WTC11 (cell line): ENCODE measurements at regions of chr18 and their contacts with region 1.

Region 1: DNA sequence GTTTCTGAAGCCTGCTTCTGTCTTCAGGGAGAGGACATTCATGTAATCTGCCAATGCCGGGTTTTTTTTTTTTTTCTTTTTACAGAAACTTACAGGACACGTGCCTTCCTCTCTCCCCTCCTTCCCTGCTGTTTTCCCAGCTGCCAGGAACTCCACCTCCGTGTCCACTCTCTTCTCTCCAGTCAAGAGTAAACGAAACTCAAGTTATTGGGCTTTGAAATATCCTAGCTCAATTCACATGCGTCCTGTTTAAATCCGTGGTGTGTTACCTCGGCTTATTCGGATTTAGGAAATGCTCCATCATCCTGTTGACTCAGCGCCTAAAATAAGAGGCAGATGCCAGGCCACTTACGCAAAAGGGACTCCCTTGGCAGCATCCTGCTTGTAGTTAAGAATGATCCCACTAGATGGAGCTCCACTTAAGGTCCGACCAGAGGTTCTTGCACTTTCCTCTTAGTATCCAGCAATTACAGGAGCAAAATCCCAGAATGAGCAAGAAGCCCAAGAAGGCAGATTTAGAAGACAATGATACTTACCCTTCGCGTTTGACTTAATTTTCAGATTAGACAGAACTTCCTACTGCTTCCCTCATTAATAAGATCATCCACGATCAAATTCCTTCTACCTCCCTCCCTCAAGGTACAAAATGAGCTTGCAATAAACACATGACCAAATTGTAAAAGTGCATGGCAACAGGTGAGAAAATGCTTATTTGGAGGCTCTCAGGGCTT is 97.2 kb upstream of the ZCCHC2 start:
- DNase-seq: peak; percentile 57
- ATAC-seq: peak; percentile 94
- H3K4me3 Mint-ChIP-seq: peak overlapping the region; percentile 72
- H3K27ac Mint-ChIP-seq: peak overlapping the region; percentile 58; the same call in 1 of the 2 replicates
- H3K4me1 Mint-ChIP-seq: peaks cover 15% of the 10 kb centered on the region
- H3K27me3 Mint-ChIP-seq: peaks cover 2% of the 10 kb centered on the region
- CTCF ChIP-seq: peak; percentile 43

Region 2: GRCh38 chr18:62324917-62325805 is 100.5 kb before region 1 on chr18 and contains the start of gene TNFRSF11A:
- CTCF ChIA-PET with region 1: interaction called, 10 read pairs
- POLR2A ChIA-PET with region 1: no interaction called
- DNase-seq: peak; percentile 75
- ATAC-seq: peak; percentile 78
- H3K4me3 Mint-ChIP-seq: peak within 1 kb of the TSS; percentile 80
- H3K27ac Mint-ChIP-seq: no peak within 1 kb of the TSS
- H3K4me1 Mint-ChIP-seq: peaks cover 61% of the 10 kb centered on the region
- H3K27me3 Mint-ChIP-seq: peaks cover 55% of the 10 kb centered on the region
- CTCF ChIP-seq: peak; percentile 43; the same call in 1 of the 2 replicates
- total RNA-seq, gene TNFRSF11A: 3.9 to 4.9 TPM (median 4.7 TPM) in 3 replicates

Region 3: DNA sequence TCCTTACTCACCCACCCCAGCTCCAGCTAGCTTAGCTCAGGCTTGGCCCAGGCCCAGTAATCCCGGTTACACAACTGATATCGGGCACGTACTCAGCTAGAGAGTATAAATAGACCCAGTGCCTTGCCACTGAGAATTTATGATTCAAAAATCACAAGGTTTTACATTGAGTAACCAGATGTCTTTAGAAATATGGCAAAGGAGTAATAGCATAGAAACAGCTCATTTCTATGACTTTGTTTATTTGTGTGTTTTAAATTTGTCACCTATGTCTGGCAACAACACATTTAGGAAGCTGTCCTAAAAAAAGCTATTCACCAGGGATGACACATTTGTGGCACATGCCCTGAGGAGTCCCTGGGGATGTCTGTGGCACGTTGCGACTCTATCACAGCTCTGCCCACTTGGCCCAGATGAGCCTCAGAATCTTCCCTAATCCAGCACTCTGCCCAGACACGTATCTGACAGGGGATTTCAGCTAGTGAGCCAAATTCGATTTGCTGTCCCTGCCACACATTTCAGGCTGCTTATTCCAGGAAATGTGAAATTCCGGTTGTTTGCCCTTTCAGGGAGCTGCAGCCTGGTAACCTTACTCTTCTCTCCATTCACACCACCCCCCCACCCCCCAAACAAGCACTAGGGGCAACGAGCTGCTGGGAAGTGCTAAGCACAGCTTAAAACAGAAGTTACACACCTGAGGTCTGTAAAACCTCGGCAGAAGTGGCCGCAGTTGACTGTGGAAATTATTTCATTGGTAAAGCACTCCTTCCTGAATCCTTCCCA is 11.8 kb after region 1 on chr18:
- CTCF ChIA-PET with region 1: interaction called, 18 read pairs
- POLR2A ChIA-PET with region 1: no interaction called
- DNase-seq: no peak
- ATAC-seq: no peak
- H3K4me3 Mint-ChIP-seq: no peak overlapping the region
- H3K27ac Mint-ChIP-seq: no peak overlapping the region
- H3K4me1 Mint-ChIP-seq: peaks cover 10% of the 10 kb centered on the region
- H3K27me3 Mint-ChIP-seq: no peaks in the 10 kb centered on the region
- CTCF ChIP-seq: no peak

Region 4: GRCh38 chr18:62458346-62458745 is 32.7 kb after region 1 on chr18:
- CTCF ChIA-PET with region 1: interaction called, 13 read pairs
- POLR2A ChIA-PET with region 1: no interaction called
- DNase-seq: no peak
- ATAC-seq: peak; percentile 51; the same call in 1 of the 2 replicates
- H3K4me3 Mint-ChIP-seq: no peak overlapping the region
- H3K27ac Mint-ChIP-seq: no peak overlapping the region
- H3K4me1 Mint-ChIP-seq: peaks cover 15% of the 10 kb centered on the region
- H3K27me3 Mint-ChIP-seq: no peaks in the 10 kb centered on the region
- CTCF ChIP-seq: no peak

Region 5: GRCh38 chr18:62522504-62523254 is 97.0 kb after region 1 on chr18 and contains the start of gene ZCCHC2:
- CTCF ChIA-PET with region 1: interaction called, 23 read pairs
- POLR2A ChIA-PET with region 1: interaction called, 3 read pairs
- DNase-seq: peak; percentile 98
- ATAC-seq: peak; percentile 74
- H3K4me3 Mint-ChIP-seq: peak within 1 kb of the TSS; percentile 87
- H3K27ac Mint-ChIP-seq: no peak within 1 kb of the TSS
- H3K4me1 Mint-ChIP-seq: peaks cover 31% of the 10 kb centered on the region
- H3K27me3 Mint-ChIP-seq: peaks cover 33% of the 10 kb centered on the region
- CTCF ChIP-seq: no peak
- total RNA-seq, gene ZCCHC2: 15.9 to 18.8 TPM (median 16.7 TPM) in 3 replicates

Region 6: GRCh38 chr18:62566199-62566598 is 140.6 kb after region 1 on chr18:
- CTCF ChIA-PET with region 1: interaction called, 25 read pairs
- POLR2A ChIA-PET with region 1: no interaction called
- DNase-seq: peak; percentile 29
- ATAC-seq: peak; percentile 61
- H3K4me3 Mint-ChIP-seq: no peak overlapping the region
- H3K27ac Mint-ChIP-seq: no peak overlapping the region
- H3K4me1 Mint-ChIP-seq: no peaks in the 10 kb centered on the region
- H3K27me3 Mint-ChIP-seq: no peaks in the 10 kb centered on the region
- CTCF ChIP-seq: no peak